CD8-positive, alpha-beta T cell (primary cell): ENCODE measurements at regions of chr4 and their contacts with region 1.

Region 1: GRCh38 chr4:107283587-107284559 is 247.8 kb upstream of the DKK2 start:
- DNase-seq: no peak
- ATAC-seq: no peak
- H3K4me3 ChIP-seq: no peak overlapping the region
- H3K4me3 Mint-ChIP-seq: no peak overlapping the region
- H3K27ac ChIP-seq: no peak overlapping the region
- H3K27ac Mint-ChIP-seq: no peak overlapping the region
- H3K4me1 ChIP-seq: no peaks in the 10 kb centered on the region
- H3K4me1 Mint-ChIP-seq: no peaks in the 10 kb centered on the region
- H3K27me3 ChIP-seq: no peaks in the 10 kb centered on the region
- H3K27me3 Mint-ChIP-seq: no peaks in the 10 kb centered on the region
- CTCF ChIP-seq: no peak

Region 2: DNA sequence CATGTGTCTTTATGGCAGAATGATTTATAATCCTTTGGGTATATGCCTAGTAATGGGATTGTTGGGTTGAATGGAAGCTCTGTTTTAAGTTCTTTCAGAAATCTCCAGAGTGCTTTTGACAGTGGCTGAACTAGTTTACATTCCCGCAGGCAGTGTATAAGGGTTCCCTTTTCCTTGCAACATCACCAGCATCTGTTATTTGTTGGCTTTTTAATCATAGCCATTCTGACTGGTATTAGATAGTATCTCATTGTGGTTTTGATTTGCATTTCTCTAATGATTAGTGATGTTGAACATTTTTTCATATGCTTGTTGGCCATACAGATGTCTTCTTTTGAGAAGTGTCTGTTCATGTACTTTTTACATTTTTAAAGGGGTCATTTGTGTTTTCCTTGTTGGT is 1097.7 kb before region 1 on chr4:
- CTCF ChIA-PET with region 1: no interaction called
- POLR2A ChIA-PET with region 1: no interaction called
- intact Hi-C with region 1: no loop called
- DNase-seq: no peak
- ATAC-seq: no peak
- H3K4me3 ChIP-seq: no peak overlapping the region
- H3K4me3 Mint-ChIP-seq: no peak overlapping the region
- H3K27ac ChIP-seq: no peak overlapping the region
- H3K27ac Mint-ChIP-seq: no peak overlapping the region
- H3K4me1 ChIP-seq: no peaks in the 10 kb centered on the region
- H3K4me1 Mint-ChIP-seq: no peaks in the 10 kb centered on the region
- H3K27me3 ChIP-seq: no peaks in the 10 kb centered on the region
- H3K27me3 Mint-ChIP-seq: no peaks in the 10 kb centered on the region
- CTCF ChIP-seq: no peak

Region 3: DNA sequence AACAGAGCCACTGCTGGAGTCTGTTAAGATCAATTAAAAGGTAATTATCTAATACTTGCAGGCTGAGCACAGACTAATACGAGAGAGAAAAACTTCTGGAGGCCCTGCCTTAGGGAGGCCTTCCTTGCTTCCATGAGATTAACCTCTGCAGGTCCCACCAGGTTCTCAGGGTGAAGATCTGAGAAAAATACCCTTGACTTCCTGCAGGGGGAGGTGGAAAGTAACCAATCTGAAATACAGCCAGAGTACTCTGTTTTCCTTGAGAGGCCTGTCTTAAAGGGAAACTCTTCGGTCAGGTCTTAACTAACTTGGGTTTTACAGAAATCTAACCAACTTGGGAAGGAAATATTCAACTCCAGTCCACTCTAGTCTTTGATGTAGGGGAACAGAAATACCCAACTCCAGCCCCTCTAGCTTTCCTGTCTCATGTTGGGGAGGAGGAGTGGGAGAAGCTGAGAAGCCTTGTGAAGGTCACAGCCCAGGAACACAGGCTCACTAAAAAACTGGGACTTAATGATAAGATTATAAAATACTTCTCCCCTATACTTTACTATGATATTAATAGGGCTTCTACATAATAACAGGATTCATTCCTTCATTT is 1045.0 kb before region 1 on chr4:
- CTCF ChIA-PET with region 1: no interaction called
- POLR2A ChIA-PET with region 1: no interaction called
- intact Hi-C with region 1: loop called in 1 of 2 experiments (anchors 10 kb)
- DNase-seq: peak in 2 of 9 experiments; percentile 23 to 32
- ATAC-seq: no peak
- H3K4me3 ChIP-seq: no peak overlapping the region
- H3K4me3 Mint-ChIP-seq: no peak overlapping the region
- H3K27ac ChIP-seq: no peak overlapping the region
- H3K27ac Mint-ChIP-seq: no peak overlapping the region
- H3K4me1 ChIP-seq: no peaks in the 10 kb centered on the region
- H3K4me1 Mint-ChIP-seq: no peaks in the 10 kb centered on the region
- H3K27me3 ChIP-seq: no peaks in the 10 kb centered on the region
- H3K27me3 Mint-ChIP-seq: no peaks in the 10 kb centered on the region
- CTCF ChIP-seq: peak; percentile 58

Region 4: GRCh38 chr4:107349266-107349665 is 65.4 kb after region 1 on chr4:
- CTCF ChIA-PET with region 1: no interaction called
- POLR2A ChIA-PET with region 1: no interaction called
- intact Hi-C with region 1: loop called in 1 of 2 experiments (anchors 2 kb)
- DNase-seq: no peak
- ATAC-seq: no peak
- H3K4me3 ChIP-seq: no peak overlapping the region
- H3K4me3 Mint-ChIP-seq: no peak overlapping the region
- H3K27ac ChIP-seq: no peak overlapping the region
- H3K27ac Mint-ChIP-seq: no peak overlapping the region
- H3K4me1 ChIP-seq: no peaks in the 10 kb centered on the region
- H3K4me1 Mint-ChIP-seq: no peaks in the 10 kb centered on the region
- H3K27me3 ChIP-seq: no peaks in the 10 kb centered on the region
- H3K27me3 Mint-ChIP-seq: no peaks in the 10 kb centered on the region
- CTCF ChIP-seq: no peak